ENCODE measurements at regions of chr7 and their contacts with region 1.

Region 1: GRCh38 chr7:155804897-155805825 is 7.1 kb downstream of the SHH start:
- DNase-seq: peak; percentile 63
- ATAC-seq: peak; percentile 77
- H3K4me3 Mint-ChIP-seq: peak overlapping the region; percentile 78
- H3K27ac Mint-ChIP-seq: no peak overlapping the region
- H3K4me1 Mint-ChIP-seq: peaks cover 26% of the 10 kb centered on the region
- H3K27me3 Mint-ChIP-seq: peaks cover 50% of the 10 kb centered on the region
- CTCF ChIP-seq: no peak

Region 2: DNA sequence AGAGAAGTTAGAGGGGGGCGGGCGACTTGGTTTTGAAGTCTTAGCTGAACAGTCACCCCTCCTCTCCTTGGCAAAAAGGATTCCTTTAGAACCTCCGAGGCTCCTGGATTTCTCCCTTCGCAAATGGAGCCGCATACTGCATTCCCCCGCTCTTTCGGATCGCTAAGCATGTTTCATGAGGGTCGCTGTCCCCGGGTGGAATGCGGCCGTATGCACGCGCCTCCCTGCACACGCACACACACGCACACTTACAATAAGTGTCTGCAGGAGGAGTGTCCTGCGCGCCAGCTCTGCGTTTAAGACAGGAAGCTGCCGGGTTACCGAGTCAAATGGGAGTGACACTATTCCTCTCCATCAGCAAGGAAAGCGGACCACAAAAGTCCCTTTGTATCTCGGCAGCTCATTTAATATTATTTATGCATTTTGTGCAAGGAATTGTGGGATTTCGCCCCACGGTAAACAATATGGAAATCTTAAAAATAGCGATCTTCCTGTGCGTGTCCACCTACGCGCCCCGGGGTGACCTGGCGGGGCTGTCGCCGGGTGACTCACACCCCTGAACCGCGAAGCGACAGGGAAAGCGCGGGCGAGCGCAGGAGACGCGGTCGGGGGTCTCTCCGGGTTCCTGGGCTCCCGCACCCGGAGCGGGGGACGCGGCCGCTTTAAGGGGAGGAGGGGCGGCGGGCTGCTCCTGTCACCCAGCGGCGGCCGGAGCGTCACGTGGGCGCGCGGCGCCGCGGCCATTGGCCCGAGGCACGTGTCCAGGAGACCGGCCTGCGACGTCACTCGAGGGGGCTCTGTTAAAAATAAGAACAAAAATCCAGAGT is 348.2 kb before region 1 on chr7:
- CTCF ChIA-PET with region 1: no interaction called
- POLR2A ChIA-PET with region 1: no interaction called
- intact Hi-C with region 1: loop called (anchors 5 kb)
- DNase-seq: no peak
- ATAC-seq: peak; percentile 47
- H3K4me3 Mint-ChIP-seq: peak overlapping the region; percentile 64
- H3K27ac Mint-ChIP-seq: no peak overlapping the region
- H3K4me1 Mint-ChIP-seq: peaks cover 26% of the 10 kb centered on the region
- H3K27me3 Mint-ChIP-seq: peaks cover 49% of the 10 kb centered on the region
- CTCF ChIP-seq: no peak

Region 3: DNA sequence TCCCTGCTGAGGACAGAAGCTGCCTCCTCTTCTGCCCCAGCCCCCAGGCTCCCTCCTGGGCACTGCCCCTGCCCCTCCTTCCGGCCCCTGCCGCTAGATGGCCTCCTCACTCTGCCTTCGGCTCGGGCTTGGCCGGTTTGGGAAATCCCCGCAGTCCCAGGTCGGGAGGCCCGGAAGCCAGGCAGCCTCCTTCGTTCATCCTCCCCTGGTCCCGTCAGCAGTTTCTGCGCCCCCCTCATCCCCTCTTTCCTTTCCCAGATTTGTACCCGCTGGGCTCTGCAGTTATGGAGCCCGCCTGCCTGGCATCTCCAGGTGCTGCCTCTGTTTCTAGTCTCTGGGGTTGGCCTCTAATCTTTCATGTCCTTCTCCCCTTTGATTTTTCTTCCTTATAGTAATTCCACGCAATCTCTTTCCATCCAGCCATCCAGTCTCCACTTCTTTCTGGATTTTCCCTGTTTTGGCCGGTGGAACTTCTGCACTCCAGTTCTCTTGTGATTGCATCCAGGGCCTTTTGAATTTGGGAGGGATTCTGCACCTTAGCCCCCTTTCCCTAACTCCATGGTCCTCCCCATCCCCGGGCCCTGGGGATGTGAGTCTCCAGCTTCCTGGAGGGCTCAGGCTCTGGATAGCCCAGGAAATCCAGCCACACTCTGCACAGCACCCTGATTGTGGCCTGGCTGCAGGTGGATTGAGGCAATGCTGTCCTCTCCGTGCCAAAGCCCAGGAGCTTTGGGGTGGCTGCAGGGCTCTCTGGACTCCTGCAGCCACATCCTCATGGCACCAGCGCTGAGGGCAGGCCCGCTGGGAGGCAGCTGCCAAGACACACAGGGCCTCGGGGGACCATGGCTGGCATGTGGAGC is 10.4 kb after region 1 on chr7:
- CTCF ChIA-PET with region 1: no interaction called
- POLR2A ChIA-PET with region 1: no interaction called
- intact Hi-C with region 1: no loop called
- DNase-seq: peak; percentile 46
- ATAC-seq: peak; percentile 82
- H3K4me3 Mint-ChIP-seq: peak overlapping the region; percentile 49
- H3K27ac Mint-ChIP-seq: no peak overlapping the region
- H3K4me1 Mint-ChIP-seq: peaks cover 11% of the 10 kb centered on the region
- H3K27me3 Mint-ChIP-seq: peaks cover 55% of the 10 kb centered on the region
- CTCF ChIP-seq: no peak

Region 4: GRCh38 chr7:155844019-155844453 is 38.9 kb after region 1 on chr7:
- CTCF ChIA-PET with region 1: no interaction called
- POLR2A ChIA-PET with region 1: no interaction called
- intact Hi-C with region 1: no loop called
- DNase-seq: no peak
- ATAC-seq: no peak
- H3K4me3 Mint-ChIP-seq: no peak overlapping the region
- H3K27ac Mint-ChIP-seq: no peak overlapping the region
- H3K4me1 Mint-ChIP-seq: no peaks in the 10 kb centered on the region
- H3K27me3 Mint-ChIP-seq: peaks cover 4% of the 10 kb centered on the region
- CTCF ChIP-seq: no peak

Region 5: GRCh38 chr7:157004050-157004838 is 1199.1 kb after region 1 on chr7:
- CTCF ChIA-PET with region 1: no interaction called
- POLR2A ChIA-PET with region 1: no interaction called
- intact Hi-C with region 1: loop called (anchors 5 kb)
- DNase-seq: no peak
- ATAC-seq: no peak
- H3K4me3 Mint-ChIP-seq: no peak overlapping the region
- H3K27ac Mint-ChIP-seq: no peak overlapping the region
- H3K4me1 Mint-ChIP-seq: peaks cover 26% of the 10 kb centered on the region
- H3K27me3 Mint-ChIP-seq: peaks cover 53% of the 10 kb centered on the region
- CTCF ChIP-seq: no peak